ENCODE measurements at regions of chr2 and their contacts with region 1.

Region 1: GRCh38 chr2:234288974-234289455 is 207.9 kb downstream of the ARL4C start:
- DNase-seq: peak; percentile 75 to 90
- ATAC-seq: peak; percentile 1 to 16 (median 12)
- H3K4me3 ChIP-seq: no peak overlapping the region
- H3K4me3 Mint-ChIP-seq: peak overlapping the region; percentile 85
- H3K27ac ChIP-seq: peak overlapping the region; percentile 99
- H3K27ac Mint-ChIP-seq: peak overlapping the region; percentile 97 to 98
- H3K4me1 ChIP-seq: peaks cover 63% of the 10 kb centered on the region
- H3K4me1 Mint-ChIP-seq: peaks cover 63 to 81% of the 10 kb centered on the region in 2 donors
- H3K27me3 ChIP-seq: no peaks in the 10 kb centered on the region
- H3K27me3 Mint-ChIP-seq: no peaks in the 10 kb centered on the region
- CTCF ChIP-seq: peak; percentile 88

Region 2: GRCh38 chr2:233519787-233520611 is 769.0 kb before region 1 on chr2:
- intact Hi-C with region 1: no loop called
- DNase-seq: no peak
- ATAC-seq: no peak
- H3K4me3 ChIP-seq: no peak overlapping the region
- H3K4me3 Mint-ChIP-seq: no peak overlapping the region
- H3K27ac ChIP-seq: peak overlapping the region; percentile 50
- H3K27ac Mint-ChIP-seq: no peak overlapping the region
- H3K4me1 ChIP-seq: no peaks in the 10 kb centered on the region
- H3K4me1 Mint-ChIP-seq: no peaks in the 10 kb centered on the region
- H3K27me3 ChIP-seq: no peaks in the 10 kb centered on the region
- H3K27me3 Mint-ChIP-seq: no peaks in the 10 kb centered on the region
- CTCF ChIP-seq: no peak

Region 3: DNA sequence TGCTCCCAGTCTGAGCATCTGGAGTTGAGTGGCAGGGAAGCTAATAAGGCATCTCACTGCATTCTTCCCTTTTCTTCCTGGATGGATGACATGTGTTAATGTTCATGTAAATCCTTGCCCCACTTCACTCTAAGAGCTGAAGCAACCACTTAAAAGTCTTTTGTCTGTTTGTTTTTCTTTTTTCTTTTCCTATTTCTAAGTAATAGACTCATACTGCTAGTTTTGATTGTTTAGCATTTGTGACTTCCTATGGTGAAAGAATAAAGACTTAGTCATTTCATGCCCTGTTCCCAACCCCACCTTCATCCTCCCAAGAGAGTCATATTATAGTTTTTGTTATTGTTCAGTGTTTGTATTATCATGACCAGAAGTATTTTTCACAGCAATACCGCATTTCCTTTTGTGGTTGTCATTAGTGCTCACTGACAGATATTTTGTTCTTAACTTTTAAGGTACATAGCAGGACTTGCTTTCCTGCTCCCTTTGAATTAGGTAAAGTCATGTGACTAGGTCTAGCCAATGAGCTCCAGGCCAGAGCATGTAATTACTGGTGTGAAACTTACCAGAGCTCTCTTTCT is 256.6 kb before region 1 on chr2:
- intact Hi-C with region 1: loop called (anchors 2 kb)
- DNase-seq: peak in 1 of 2 donors; percentile 80
- ATAC-seq: peak; percentile 73 to 90 (median 83)
- H3K4me3 ChIP-seq: no peak overlapping the region
- H3K4me3 Mint-ChIP-seq: peak overlapping the region; percentile 71
- H3K27ac ChIP-seq: peak overlapping the region; percentile 58
- H3K27ac Mint-ChIP-seq: peak overlapping the region; percentile 83 to 85
- H3K4me1 ChIP-seq: peaks cover 37% of the 10 kb centered on the region
- H3K4me1 Mint-ChIP-seq: peaks cover 59 to 62% of the 10 kb centered on the region in 2 donors
- H3K27me3 ChIP-seq: no peaks in the 10 kb centered on the region
- H3K27me3 Mint-ChIP-seq: no peaks in the 10 kb centered on the region
- CTCF ChIP-seq: no peak

Region 4: GRCh38 chr2:234278556-234279255 is 10.3 kb before region 1 on chr2:
- intact Hi-C with region 1: loop called (anchors 1 kb)
- DNase-seq: peak; percentile 23 to 67
- ATAC-seq: peak; percentile 74 to 78 (median 76)
- H3K4me3 ChIP-seq: no peak overlapping the region
- H3K4me3 Mint-ChIP-seq: peak overlapping the region; percentile 45
- H3K27ac ChIP-seq: peak overlapping the region; percentile 65
- H3K27ac Mint-ChIP-seq: peak overlapping the region; percentile 88 to 92
- H3K4me1 ChIP-seq: peaks cover 67% of the 10 kb centered on the region
- H3K4me1 Mint-ChIP-seq: peaks cover 70 to 74% of the 10 kb centered on the region in 2 donors
- H3K27me3 ChIP-seq: no peaks in the 10 kb centered on the region
- H3K27me3 Mint-ChIP-seq: no peaks in the 10 kb centered on the region
- CTCF ChIP-seq: no peak

Region 5: GRCh38 chr2:234425619-234426603 is 136.9 kb after region 1 on chr2:
- intact Hi-C with region 1: loop called (anchors 1 kb)
- DNase-seq: peak; percentile 56 to 93
- ATAC-seq: peak; percentile 49 to 68 (median 57)
- H3K4me3 ChIP-seq: no peak overlapping the region
- H3K4me3 Mint-ChIP-seq: peak overlapping the region; percentile 80
- H3K27ac ChIP-seq: peak overlapping the region; percentile 98
- H3K27ac Mint-ChIP-seq: peak overlapping the region; percentile 98 to 100
- H3K4me1 ChIP-seq: peaks cover 89% of the 10 kb centered on the region
- H3K4me1 Mint-ChIP-seq: peaks cover 90% of the 10 kb centered on the region in 2 donors
- H3K27me3 ChIP-seq: no peaks in the 10 kb centered on the region
- H3K27me3 Mint-ChIP-seq: no peaks in the 10 kb centered on the region
- CTCF ChIP-seq: no peak

Region 6: GRCh38 chr2:234488913-234489451 is 200.0 kb after region 1 on chr2:
- intact Hi-C with region 1: loop called (anchors 1 kb)
- DNase-seq: peak; percentile 51 to 93
- ATAC-seq: peak; percentile 55 to 62 (median 56)
- H3K4me3 ChIP-seq: no peak overlapping the region
- H3K4me3 Mint-ChIP-seq: peak overlapping the region; percentile 100
- H3K27ac ChIP-seq: peak overlapping the region; percentile 94
- H3K27ac Mint-ChIP-seq: peak overlapping the region; percentile 95 to 99
- H3K4me1 ChIP-seq: peaks cover 82% of the 10 kb centered on the region
- H3K4me1 Mint-ChIP-seq: peaks cover 89 to 92% of the 10 kb centered on the region in 2 donors
- H3K27me3 ChIP-seq: no peaks in the 10 kb centered on the region
- H3K27me3 Mint-ChIP-seq: no peaks in the 10 kb centered on the region
- CTCF ChIP-seq: no peak

Measured in natural killer cell (primary cell).